HepG2 (cell line): ENCODE measurements at regions of chr2 and their contacts with region 1.

Region 1: GRCh38 chr2:195318440-195319111 is 338.4 kb upstream of the SLC39A10 start:
- DNase-seq: peak; percentile 41
- ATAC-seq: peak; percentile 62
- H3K4me3 ChIP-seq: no peak overlapping the region
- H3K27ac ChIP-seq: no peak overlapping the region
- H3K4me1 ChIP-seq: no peaks in the 10 kb centered on the region
- H3K27me3 ChIP-seq: no peaks in the 10 kb centered on the region; a peak in 1 of 5 replicates
- CTCF ChIP-seq: peak; percentile 72
- EP300 ChIP-seq: no peak
- POLR2A ChIP-seq: no peak
- RAD21 ChIP-seq: peak; percentile 67; the same call in 1 of the 2 replicates

Region 2: GRCh38 chr2:193695367-193695766 is 1623.2 kb before region 1 on chr2:
- CTCF ChIA-PET with region 1: interaction called, 3 read pairs
- POLR2A ChIA-PET with region 1: no interaction called
- in situ Hi-C with region 1: loop called (anchors 10 kb)
- intact Hi-C with region 1: no loop called
- DNase-seq: peak; percentile 30
- ATAC-seq: peak; percentile 92
- H3K4me3 ChIP-seq: no peak overlapping the region
- H3K27ac ChIP-seq: no peak overlapping the region
- H3K4me1 ChIP-seq: no peaks in the 10 kb centered on the region
- H3K27me3 ChIP-seq: no peaks in the 10 kb centered on the region
- CTCF ChIP-seq: peak; percentile 47
- EP300 ChIP-seq: no peak
- POLR2A ChIP-seq: no peak
- RAD21 ChIP-seq: no peak

Region 3: DNA sequence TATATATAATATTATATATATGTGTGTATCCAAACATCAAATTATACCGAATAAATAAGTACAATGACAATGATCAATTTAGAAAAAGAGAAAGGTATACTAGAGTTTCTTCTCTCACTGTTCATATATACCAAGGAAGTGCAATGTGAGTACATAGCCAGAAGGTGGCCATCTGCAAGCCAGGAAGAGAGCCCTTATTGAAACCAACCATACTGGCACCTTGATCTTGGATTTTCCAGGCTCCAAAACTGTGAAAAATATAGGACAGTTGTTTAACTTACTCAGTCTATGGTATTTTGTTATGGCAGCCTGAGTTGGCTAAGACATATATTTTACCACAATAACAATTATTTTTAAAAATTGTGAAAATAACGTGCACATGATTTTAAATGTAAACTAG is 1151.8 kb before region 1 on chr2:
- CTCF ChIA-PET with region 1: interaction called, 6 read pairs
- POLR2A ChIA-PET with region 1: no interaction called
- in situ Hi-C with region 1: loop called (anchors 5 kb)
- intact Hi-C with region 1: loop called (anchors 1 kb)
- DNase-seq: peak; percentile 39
- ATAC-seq: peak; percentile 86
- H3K4me3 ChIP-seq: no peak overlapping the region
- H3K27ac ChIP-seq: no peak overlapping the region
- H3K4me1 ChIP-seq: no peaks in the 10 kb centered on the region
- H3K27me3 ChIP-seq: no peaks in the 10 kb centered on the region
- CTCF ChIP-seq: peak; percentile 65
- EP300 ChIP-seq: no peak
- POLR2A ChIP-seq: no peak
- RAD21 ChIP-seq: no peak

Region 4: DNA sequence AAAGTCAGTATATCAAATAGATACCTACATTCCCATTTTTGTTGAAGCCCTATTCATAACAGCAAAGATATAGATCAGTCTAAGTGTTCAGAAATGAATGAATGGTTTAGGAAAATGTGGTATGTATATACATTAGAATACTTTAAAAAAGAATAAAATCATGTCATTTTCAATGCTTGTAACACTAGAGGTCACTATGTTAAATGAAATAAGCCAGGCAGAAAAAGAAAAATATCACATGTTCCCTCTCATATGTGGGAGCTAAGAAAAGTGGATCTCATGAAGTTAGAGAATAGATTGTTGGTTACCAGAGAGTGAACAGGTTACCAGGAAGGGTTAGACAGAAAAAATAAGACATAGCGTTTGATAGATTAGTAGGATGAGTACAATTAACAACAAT is 772.6 kb before region 1 on chr2:
- CTCF ChIA-PET with region 1: no interaction called
- POLR2A ChIA-PET with region 1: no interaction called
- in situ Hi-C with region 1: loop called (anchors 10 kb)
- intact Hi-C with region 1: loop called (anchors 1 kb)
- DNase-seq: peak; percentile 4
- ATAC-seq: no peak
- H3K4me3 ChIP-seq: no peak overlapping the region
- H3K27ac ChIP-seq: no peak overlapping the region
- H3K4me1 ChIP-seq: no peaks in the 10 kb centered on the region
- H3K27me3 ChIP-seq: no peaks in the 10 kb centered on the region
- CTCF ChIP-seq: no peak; the same call in 1 of the 2 replicates
- EP300 ChIP-seq: no peak
- POLR2A ChIP-seq: no peak
- RAD21 ChIP-seq: no peak

Region 5: GRCh38 chr2:194559964-194560363 is 758.6 kb before region 1 on chr2:
- CTCF ChIA-PET with region 1: interaction called, 6 read pairs
- POLR2A ChIA-PET with region 1: no interaction called
- in situ Hi-C with region 1: loop called (anchors 10 kb)
- intact Hi-C with region 1: loop called (anchors 5 kb)
- DNase-seq: no peak
- ATAC-seq: no peak
- H3K4me3 ChIP-seq: no peak overlapping the region
- H3K27ac ChIP-seq: no peak overlapping the region
- H3K4me1 ChIP-seq: no peaks in the 10 kb centered on the region
- H3K27me3 ChIP-seq: no peaks in the 10 kb centered on the region
- CTCF ChIP-seq: no peak
- EP300 ChIP-seq: no peak
- POLR2A ChIP-seq: no peak
- RAD21 ChIP-seq: no peak

Region 6: DNA sequence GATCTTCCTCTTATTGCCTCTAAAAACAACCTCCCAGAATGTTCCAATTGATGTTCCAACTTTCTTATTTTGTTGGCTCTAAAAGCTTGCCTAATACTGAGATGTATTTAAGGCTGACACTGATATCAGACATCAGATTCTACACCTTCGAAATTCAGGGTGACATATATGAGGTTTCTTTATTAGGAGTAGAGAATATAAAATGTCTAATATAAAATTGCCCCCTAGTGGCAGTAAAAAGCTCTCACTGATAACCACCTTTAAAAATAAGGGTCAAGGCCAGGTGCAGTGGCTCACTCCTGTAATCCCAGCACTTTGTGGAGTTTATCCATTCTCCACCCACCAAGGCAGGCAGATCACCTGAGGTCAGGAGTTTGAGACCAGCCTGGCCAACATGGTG is 451.2 kb before region 1 on chr2:
- CTCF ChIA-PET with region 1: no interaction called
- POLR2A ChIA-PET with region 1: no interaction called
- in situ Hi-C with region 1: no loop called
- intact Hi-C with region 1: loop called (anchors 5 kb)
- DNase-seq: no peak
- ATAC-seq: peak; percentile 52
- H3K4me3 ChIP-seq: no peak overlapping the region
- H3K27ac ChIP-seq: no peak overlapping the region
- H3K4me1 ChIP-seq: no peaks in the 10 kb centered on the region
- H3K27me3 ChIP-seq: no peaks in the 10 kb centered on the region
- CTCF ChIP-seq: 0 out of 2 replicates have a peak, but pooled peaks have one; percentile 11
- EP300 ChIP-seq: no peak
- POLR2A ChIP-seq: no peak
- RAD21 ChIP-seq: no peak